Calu3 (cell line): ENCODE measurements at regions of chr6 and their contacts with region 1.

Region 1: DNA sequence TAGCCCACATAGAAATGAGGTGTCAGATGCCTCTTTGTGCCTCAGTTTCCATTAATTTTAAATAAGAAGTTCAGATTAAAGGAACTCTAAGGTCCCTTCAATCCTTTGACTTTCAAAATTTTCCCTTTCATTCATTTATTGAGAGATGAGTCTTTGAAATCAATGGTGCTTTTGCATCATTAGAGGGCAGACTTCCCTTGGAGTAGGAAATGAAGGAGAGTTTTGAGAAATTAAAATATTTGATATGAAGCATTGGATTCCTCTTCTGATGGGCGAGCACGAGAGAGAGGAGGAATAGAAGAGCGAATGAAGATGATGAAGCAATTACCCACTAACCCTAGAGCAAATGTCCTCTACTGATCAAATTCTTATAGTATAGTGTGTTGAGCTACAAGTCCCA is 105.7 kb downstream of the EDN1 start:
- DNase-seq: no peak
- H3K4me3 Mint-ChIP-seq: no peak overlapping the region
- H3K27ac Mint-ChIP-seq: peak overlapping the region; percentile 16
- H3K4me1 Mint-ChIP-seq: peaks cover 17% of the 10 kb centered on the region
- H3K27me3 Mint-ChIP-seq: no peaks in the 10 kb centered on the region
- CTCF ChIP-seq: no peak

Region 2: DNA sequence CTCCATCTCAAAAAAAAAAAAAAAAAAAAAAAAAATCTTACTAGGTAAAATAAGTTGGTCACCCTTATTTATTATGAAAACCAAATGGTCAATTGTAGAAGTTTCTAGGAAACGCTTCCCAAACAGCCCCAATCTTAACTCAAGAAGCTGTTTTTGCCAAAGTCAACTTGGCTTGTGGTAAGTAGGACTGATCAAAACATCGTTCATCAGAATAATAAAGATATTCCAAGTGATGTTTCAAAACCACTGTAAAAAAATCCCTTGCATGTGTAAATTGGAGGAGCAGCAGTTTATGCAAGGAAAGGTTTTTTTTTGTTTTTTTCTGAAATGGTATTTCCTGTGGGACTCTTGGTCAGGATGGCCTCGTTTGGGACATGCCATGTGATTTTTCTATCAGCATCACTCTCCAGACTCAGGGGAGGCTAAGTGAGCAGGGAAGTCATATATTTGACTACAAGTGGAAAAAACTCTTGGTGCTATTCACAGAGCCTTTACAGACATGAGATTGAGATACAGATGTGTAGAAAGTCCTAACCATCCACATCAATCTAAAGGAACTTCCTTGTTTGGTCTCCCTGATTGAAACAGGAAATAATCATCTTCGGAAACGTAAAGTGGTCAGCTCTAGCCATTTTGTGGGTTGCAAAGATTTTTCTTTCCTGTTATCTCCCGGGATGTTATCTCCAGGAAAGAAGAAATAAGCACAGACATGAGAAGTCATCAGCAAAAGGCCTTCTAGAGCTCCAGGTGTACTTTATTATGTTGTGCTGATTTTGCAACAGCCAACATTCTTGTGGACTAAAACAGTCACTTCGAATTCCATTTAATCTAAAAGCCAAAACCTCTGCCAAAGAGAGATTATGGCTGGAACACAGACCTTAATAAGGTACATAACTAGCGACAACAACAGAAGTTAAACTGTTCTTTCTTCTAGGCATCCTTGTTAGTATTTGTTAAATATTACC is 72.1 kb after region 1 on chr6:
- CTCF ChIA-PET with region 1: no interaction called
- intact Hi-C with region 1: no loop called
- DNase-seq: no peak
- H3K4me3 Mint-ChIP-seq: no peak overlapping the region
- H3K27ac Mint-ChIP-seq: no peak overlapping the region
- H3K4me1 Mint-ChIP-seq: no peaks in the 10 kb centered on the region
- H3K27me3 Mint-ChIP-seq: no peaks in the 10 kb centered on the region
- CTCF ChIP-seq: no peak

Region 3: DNA sequence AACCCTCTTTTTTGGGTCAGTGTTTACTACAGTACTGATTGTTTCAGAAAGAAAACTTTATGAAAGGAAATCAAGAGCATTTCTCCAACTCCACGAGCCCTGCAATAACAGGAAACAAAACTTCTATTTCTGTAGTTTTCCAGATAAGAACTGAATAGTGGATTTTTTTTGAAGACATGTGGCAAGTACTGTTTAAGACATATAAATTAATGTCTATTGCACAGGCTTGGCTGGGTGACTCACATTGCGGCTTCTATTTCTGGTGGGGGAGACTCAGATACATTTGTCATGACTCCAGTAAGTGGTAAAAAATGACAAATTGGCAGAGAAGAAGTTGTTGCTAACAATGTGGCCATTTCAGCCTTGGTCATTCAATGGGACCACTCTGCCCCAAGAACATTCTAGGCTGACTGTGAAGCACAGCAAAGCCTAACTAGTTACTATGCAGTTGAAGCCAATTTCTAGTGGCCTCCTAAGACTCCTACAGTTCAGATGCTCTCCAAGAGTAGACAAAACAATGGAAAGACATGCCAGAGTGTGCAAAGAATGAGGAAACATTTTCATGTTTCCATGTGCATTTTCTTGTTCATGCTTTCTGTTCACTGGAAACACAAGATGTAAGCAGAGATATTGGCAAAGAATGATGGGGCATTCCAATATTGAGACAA is 95.1 kb after region 1 on chr6:
- CTCF ChIA-PET with region 1: no interaction called
- intact Hi-C with region 1: no loop called
- DNase-seq: peak; percentile 39
- H3K4me3 Mint-ChIP-seq: no peak overlapping the region
- H3K27ac Mint-ChIP-seq: peak overlapping the region; percentile 77
- H3K4me1 Mint-ChIP-seq: peaks cover 33% of the 10 kb centered on the region
- H3K27me3 Mint-ChIP-seq: no peaks in the 10 kb centered on the region
- CTCF ChIP-seq: no peak

Region 4: GRCh38 chr6:12605888-12606345 is 210.0 kb after region 1 on chr6:
- CTCF ChIA-PET with region 1: no interaction called
- intact Hi-C with region 1: loop called (anchors 2 kb)
- DNase-seq: peak; percentile 60
- H3K4me3 Mint-ChIP-seq: no peak overlapping the region
- H3K27ac Mint-ChIP-seq: no peak overlapping the region
- H3K4me1 Mint-ChIP-seq: peaks cover 15% of the 10 kb centered on the region
- H3K27me3 Mint-ChIP-seq: no peaks in the 10 kb centered on the region
- CTCF ChIP-seq: peak; percentile 58